Tibial artery (tissue), 4 donors: ENCODE measurements at regions of chr15 and their contacts with region 1.

Region 1: DNA sequence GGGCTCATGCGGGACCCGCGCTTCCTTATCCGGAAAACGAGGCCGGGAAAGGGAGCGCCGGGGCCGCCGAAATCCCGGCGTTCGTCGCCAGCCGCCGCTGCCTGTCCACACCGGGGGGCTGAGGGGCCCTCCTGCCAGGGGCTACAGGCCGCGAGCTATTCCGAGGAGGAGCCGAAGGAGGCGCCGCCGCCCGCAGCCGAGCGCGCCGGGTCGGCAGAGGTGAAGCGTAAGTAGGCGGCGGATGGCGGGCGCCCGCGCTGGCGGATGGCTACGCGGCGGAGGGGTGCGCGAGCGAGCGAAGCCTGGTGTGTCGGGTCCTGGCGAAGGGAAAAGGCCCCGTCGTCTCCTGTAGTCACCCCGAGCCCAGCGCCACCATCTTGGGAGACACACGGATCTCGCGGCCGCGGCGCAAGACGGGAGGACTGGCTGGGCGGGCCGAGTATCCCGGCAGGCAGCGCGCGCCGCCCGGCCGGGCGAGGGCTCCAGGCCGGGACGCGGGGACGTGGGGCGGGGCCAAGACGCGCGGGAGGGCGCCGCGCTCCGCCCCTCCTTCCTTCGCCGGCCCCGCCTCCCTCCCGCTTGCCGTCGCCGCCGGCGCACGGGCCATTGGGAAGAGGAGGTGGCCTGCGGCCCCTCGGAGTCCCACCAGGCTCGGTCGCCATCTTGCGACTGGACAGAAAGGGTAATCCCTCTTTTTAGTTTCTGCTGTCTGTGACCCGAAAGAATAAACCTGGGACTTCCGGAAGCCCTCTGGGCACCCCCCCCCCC is at the start of gene UBE3A:
- DNase-seq: peak; percentile 87 to 95
- H3K4me3 ChIP-seq: peak within 1 kb of the TSS; percentile 99 to 100
- H3K27ac ChIP-seq: peak within 1 kb of the TSS; percentile 99 to 100
- H3K4me1 ChIP-seq: peaks cover 0 to 41% (median 15%) of the 10 kb centered on the region in 4 donors
- H3K27me3 ChIP-seq: no peaks in the 10 kb centered on the region
- CTCF ChIP-seq: peak; percentile 2 to 23

Region 2: GRCh38 chr15:24976932-24977331 is 461.9 kb before region 1 on chr15:
- intact Hi-C with region 1: no loop called
- DNase-seq: no peak
- H3K4me3 ChIP-seq: no peak overlapping the region
- H3K27ac ChIP-seq: no peak overlapping the region
- H3K4me1 ChIP-seq: no peaks in the 10 kb centered on the region
- H3K27me3 ChIP-seq: no peaks in the 10 kb centered on the region
- CTCF ChIP-seq: no peak

Region 3: DNA sequence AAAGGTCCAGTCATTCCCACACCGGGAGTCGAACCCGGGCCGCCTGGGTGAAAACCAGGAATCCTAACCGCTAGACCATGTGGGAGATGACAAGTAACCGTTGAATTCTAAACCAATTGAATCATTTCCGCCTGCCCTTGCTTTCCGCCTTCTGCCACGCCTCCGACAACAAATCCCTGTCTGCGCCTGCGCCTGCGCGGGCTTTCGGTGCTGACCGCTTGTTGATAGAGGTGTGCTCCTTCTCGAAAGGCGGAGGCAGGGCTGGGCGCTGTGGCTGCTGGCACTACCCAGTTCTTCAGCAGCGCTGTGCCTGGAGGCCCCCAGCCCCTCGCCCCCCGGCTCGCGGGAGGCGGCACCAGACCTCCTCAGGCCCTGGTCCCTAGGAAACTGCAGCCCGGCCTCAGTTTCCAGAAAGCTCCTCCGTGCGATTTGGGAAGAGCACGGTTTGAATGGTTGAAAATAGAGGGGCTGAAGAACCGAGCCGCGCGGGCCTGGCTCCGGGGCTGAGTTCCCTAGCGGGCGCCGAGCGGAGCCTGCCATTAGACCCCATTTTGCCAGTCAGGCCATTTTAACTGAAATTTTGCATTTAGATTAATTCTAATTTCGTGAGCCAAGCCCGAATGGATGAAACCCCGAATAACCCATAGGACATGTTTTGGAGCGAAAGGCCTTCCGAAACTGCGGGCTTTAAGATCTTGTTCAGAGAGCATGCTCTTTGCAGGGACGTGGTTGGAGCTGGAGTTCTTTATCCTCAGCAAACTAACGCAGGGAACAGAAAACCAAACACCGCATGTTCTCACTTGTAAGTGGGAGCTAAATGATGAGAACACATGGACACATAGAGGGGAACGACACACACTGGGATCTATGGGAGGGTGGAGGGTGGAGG is 643.7 kb after region 1 on chr15:
- intact Hi-C with region 1: loop called (anchors 10 kb)
- DNase-seq: peak; percentile 97 to 98
- H3K4me3 ChIP-seq: peak overlapping the region; percentile 78 to 93
- H3K27ac ChIP-seq: peak overlapping the region; percentile 87 to 89
- H3K4me1 ChIP-seq: peaks cover 0 to 5% (median 1%) of the 10 kb centered on the region in 4 donors
- H3K27me3 ChIP-seq: no peaks in the 10 kb centered on the region
- CTCF ChIP-seq: peak; percentile 12